ENCODE measurements at regions of chr17 and their contacts with region 1.

Region 1: GRCh38 chr17:44210342-44211192 is 8.9 kb downstream of the UBTF start:
- DNase-seq: peak; percentile 83 to 96 (median 90)
- ATAC-seq: peak; percentile 96
- H3K4me3 ChIP-seq: peak overlapping the region in 1 of 2 experiments; percentile 12
- H3K4me3 Mint-ChIP-seq: peak overlapping the region; percentile 50
- H3K27ac ChIP-seq: peak overlapping the region in 1 of 2 experiments; percentile 33
- H3K27ac Mint-ChIP-seq: peak overlapping the region; percentile 83
- H3K4me1 ChIP-seq: peaks cover 58% of the 10 kb centered on the region
- H3K4me1 Mint-ChIP-seq: peaks cover 56% of the 10 kb centered on the region
- H3K27me3 ChIP-seq: no peaks in the 10 kb centered on the region
- H3K27me3 Mint-ChIP-seq: no peaks in the 10 kb centered on the region
- CTCF ChIP-seq: peak; percentile 99

Region 2: GRCh38 chr17:44086364-44087311 is 123.9 kb before region 1 on chr17:
- CTCF ChIA-PET with region 1: no interaction called
- POLR2A ChIA-PET with region 1: no interaction called
- intact Hi-C with region 1: no loop called
- DNase-seq: peak in 7 of 9 experiments; percentile 14 to 61 (median 33)
- ATAC-seq: peak; percentile 71
- H3K4me3 ChIP-seq: no peak overlapping the region
- H3K4me3 Mint-ChIP-seq: no peak overlapping the region
- H3K27ac ChIP-seq: no peak overlapping the region
- H3K27ac Mint-ChIP-seq: peak overlapping the region; percentile 72
- H3K4me1 ChIP-seq: no peaks in the 10 kb centered on the region
- H3K4me1 Mint-ChIP-seq: peaks cover 2% of the 10 kb centered on the region
- H3K27me3 ChIP-seq: no peaks in the 10 kb centered on the region
- H3K27me3 Mint-ChIP-seq: no peaks in the 10 kb centered on the region
- CTCF ChIP-seq: no peak

Region 3: DNA sequence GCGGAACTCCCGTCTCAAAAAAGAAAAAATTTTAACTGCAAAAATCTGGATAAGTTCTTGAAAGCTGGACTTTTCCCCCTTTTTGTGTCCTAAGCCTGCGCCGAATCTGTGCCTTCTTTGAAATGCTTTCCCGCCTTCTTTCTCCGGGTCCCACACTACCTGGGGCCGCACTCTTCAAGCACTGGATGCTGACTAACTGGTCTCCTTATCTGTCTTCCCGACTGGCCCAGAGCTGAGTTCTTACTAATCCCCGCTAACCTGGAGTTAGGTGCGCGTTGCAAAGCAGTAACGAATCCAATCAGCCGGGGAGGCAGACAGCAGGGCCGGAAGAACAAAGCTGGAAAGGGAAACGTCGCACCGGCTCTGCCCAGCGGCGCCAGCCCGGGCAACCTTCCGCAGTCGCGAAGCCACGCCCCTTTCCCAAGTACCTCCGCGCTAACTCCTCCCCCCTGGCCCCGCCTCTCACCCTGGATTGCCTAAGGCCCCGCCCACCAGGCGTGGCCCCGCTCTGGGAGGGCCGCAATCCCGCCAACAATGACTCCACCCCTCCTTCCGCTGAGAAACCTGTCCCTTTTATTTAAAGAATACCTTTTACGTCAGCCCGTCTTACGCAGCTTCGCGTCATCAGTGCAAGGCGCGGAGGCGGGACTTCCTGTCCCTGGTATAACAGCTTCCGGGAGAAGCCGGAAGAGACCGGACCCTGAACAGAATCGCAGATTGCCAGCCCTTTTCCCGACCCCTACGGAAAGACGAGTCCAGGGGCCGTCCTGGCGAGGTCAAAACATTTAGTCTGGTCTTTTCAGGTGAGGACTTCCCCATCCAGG is 24.0 kb before region 1 on chr17 and contains the start of gene TMUB2:
- CTCF ChIA-PET with region 1: interaction called, 16 read pairs
- POLR2A ChIA-PET with region 1: interaction called, 12 read pairs
- intact Hi-C with region 1: no loop called
- DNase-seq: peak; percentile 99 to 100 (median 100)
- ATAC-seq: peak; percentile 97
- H3K4me3 ChIP-seq: peak within 1 kb of the TSS; percentile 89 to 94
- H3K4me3 Mint-ChIP-seq: peak within 1 kb of the TSS; percentile 100
- H3K27ac ChIP-seq: peak within 1 kb of the TSS; percentile 99
- H3K27ac Mint-ChIP-seq: peak within 1 kb of the TSS; percentile 100
- H3K4me1 ChIP-seq: peaks cover 30% of the 10 kb centered on the region
- H3K4me1 Mint-ChIP-seq: peaks cover 48% of the 10 kb centered on the region
- H3K27me3 ChIP-seq: no peaks in the 10 kb centered on the region
- H3K27me3 Mint-ChIP-seq: no peaks in the 10 kb centered on the region
- CTCF ChIP-seq: no peak
- total RNA-seq, gene TMUB2: 43.2 to 43.8 TPM

Region 4: GRCh38 chr17:44199553-44200477 is 10.8 kb before region 1 on chr17 and contains the start of gene ATXN7L3:
- CTCF ChIA-PET with region 1: interaction called, 95 read pairs
- POLR2A ChIA-PET with region 1: interaction called, 12 read pairs
- intact Hi-C with region 1: loop called in 1 of 2 experiments (anchors 1 kb)
- DNase-seq: peak; percentile 99 to 100 (median 99)
- ATAC-seq: peak; percentile 84
- H3K4me3 ChIP-seq: peak within 1 kb of the TSS; percentile 84 to 96
- H3K4me3 Mint-ChIP-seq: peak within 1 kb of the TSS; percentile 86
- H3K27ac ChIP-seq: peak within 1 kb of the TSS; percentile 69 to 92
- H3K27ac Mint-ChIP-seq: peak within 1 kb of the TSS; percentile 93
- H3K4me1 ChIP-seq: peaks cover 36% of the 10 kb centered on the region
- H3K4me1 Mint-ChIP-seq: peaks cover 43% of the 10 kb centered on the region
- H3K27me3 ChIP-seq: no peaks in the 10 kb centered on the region
- H3K27me3 Mint-ChIP-seq: no peaks in the 10 kb centered on the region
- CTCF ChIP-seq: no peak
- total RNA-seq, gene ATXN7L3: 85.5 to 85.7 TPM

Region 5: DNA sequence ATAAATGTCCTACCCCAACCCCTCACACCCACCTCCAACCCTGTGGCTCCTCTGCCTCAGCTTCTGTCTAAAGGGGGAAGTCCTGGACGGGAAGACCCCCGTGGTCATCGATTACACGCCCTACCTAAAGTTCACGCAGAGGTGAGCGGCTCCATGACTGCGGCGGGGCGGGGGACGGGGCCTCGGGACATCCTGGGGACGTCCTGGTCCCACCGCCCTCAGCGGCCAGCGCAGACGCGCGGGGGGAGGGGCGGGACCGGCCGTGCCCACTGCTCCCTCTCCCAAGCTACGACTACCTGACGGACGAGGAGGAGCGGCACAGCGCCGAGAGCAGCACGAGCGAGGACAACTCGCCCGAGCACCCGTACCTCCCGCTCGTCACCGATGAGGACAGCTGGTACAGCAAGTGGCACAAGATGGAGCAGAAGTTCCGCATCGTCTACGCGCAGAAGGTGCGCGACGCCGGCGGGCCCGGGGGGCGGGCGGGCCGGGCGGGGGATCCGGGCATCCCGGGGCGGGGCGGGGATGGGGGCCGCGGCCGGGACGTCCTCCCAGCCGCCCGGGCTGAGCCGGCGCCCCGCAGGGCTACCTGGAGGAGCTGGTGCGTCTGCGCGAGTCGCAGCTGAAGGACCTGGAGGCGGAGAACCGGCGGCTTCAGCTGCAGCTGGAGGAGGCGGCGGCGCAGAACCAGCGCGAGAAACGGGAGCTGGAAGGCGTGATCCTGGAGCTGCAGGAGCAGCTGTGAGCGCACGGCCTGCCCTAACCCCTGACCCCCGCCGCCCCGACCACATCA is 104.5 kb after region 1 on chr17:
- CTCF ChIA-PET with region 1: interaction called, 18 read pairs
- POLR2A ChIA-PET with region 1: interaction called, 3 read pairs
- intact Hi-C with region 1: no loop called
- DNase-seq: peak in 4 of 9 experiments; percentile 26 to 51 (median 38)
- ATAC-seq: peak; percentile 69
- H3K4me3 ChIP-seq: peak overlapping the region; percentile 35 to 54
- H3K4me3 Mint-ChIP-seq: peak overlapping the region; percentile 75
- H3K27ac ChIP-seq: no peak overlapping the region
- H3K27ac Mint-ChIP-seq: no peak overlapping the region
- H3K4me1 ChIP-seq: peaks cover 19% of the 10 kb centered on the region
- H3K4me1 Mint-ChIP-seq: peaks cover 14% of the 10 kb centered on the region
- H3K27me3 ChIP-seq: peaks cover 22 to 23% of the 10 kb centered on the region in 2 experiments
- H3K27me3 Mint-ChIP-seq: peaks cover 37% of the 10 kb centered on the region
- CTCF ChIP-seq: no peak

Region 6: GRCh38 chr17:44331249-44331760 is 120.7 kb after region 1 on chr17:
- CTCF ChIA-PET with region 1: interaction called, 161 read pairs
- POLR2A ChIA-PET with region 1: interaction called, 22 read pairs
- intact Hi-C with region 1: loop called (anchors 1 kb)
- DNase-seq: peak; percentile 45 to 85 (median 75)
- ATAC-seq: no peak
- H3K4me3 ChIP-seq: no peak overlapping the region
- H3K4me3 Mint-ChIP-seq: no peak overlapping the region
- H3K27ac ChIP-seq: no peak overlapping the region
- H3K27ac Mint-ChIP-seq: no peak overlapping the region
- H3K4me1 ChIP-seq: peaks cover 4% of the 10 kb centered on the region
- H3K4me1 Mint-ChIP-seq: peaks cover 12% of the 10 kb centered on the region
- H3K27me3 ChIP-seq: no peaks in the 10 kb centered on the region
- H3K27me3 Mint-ChIP-seq: no peaks in the 10 kb centered on the region
- CTCF ChIP-seq: peak; percentile 89

Region 7: DNA sequence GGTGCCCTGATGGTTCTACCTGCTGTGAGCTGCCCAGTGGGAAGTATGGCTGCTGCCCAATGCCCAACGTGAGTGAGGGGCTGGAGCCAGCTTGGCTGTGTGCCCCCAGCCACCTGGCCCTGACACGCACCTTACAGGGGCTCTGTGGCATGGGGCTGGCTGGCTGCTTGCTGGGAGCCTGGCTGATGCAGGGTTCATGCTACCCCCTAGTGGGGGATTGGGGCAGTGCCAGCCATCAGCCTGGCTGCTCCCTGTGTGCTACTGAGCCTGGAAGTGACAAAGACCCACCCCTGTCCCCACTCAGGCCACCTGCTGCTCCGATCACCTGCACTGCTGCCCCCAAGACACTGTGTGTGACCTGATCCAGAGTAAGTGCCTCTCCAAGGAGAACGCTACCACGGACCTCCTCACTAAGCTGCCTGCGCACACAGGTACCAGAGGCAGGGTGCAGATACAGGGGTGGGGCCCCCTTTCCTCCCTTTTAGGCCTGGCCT is 140.2 kb after region 1 on chr17:
- CTCF ChIA-PET with region 1: interaction called, 36 read pairs
- POLR2A ChIA-PET with region 1: interaction called, 3 read pairs
- intact Hi-C with region 1: loop called in 1 of 2 experiments (anchors 1 kb)
- DNase-seq: peak; percentile 55 to 82 (median 77)
- ATAC-seq: peak; percentile 80
- H3K4me3 ChIP-seq: no peak overlapping the region
- H3K4me3 Mint-ChIP-seq: no peak overlapping the region
- H3K27ac ChIP-seq: no peak overlapping the region
- H3K27ac Mint-ChIP-seq: no peak overlapping the region
- H3K4me1 ChIP-seq: peaks cover 11% of the 10 kb centered on the region
- H3K4me1 Mint-ChIP-seq: peaks cover 14% of the 10 kb centered on the region
- H3K27me3 ChIP-seq: no peaks in the 10 kb centered on the region
- H3K27me3 Mint-ChIP-seq: no peaks in the 10 kb centered on the region
- CTCF ChIP-seq: peak; percentile 72

Region 8: GRCh38 chr17:44385287-44386181 is 175.0 kb after region 1 on chr17:
- CTCF ChIA-PET with region 1: no interaction called
- POLR2A ChIA-PET with region 1: no interaction called
- intact Hi-C with region 1: loop called in 1 of 2 experiments (anchors 1 kb)
- DNase-seq: peak; percentile 65 to 89 (median 80)
- ATAC-seq: peak; percentile 96
- H3K4me3 ChIP-seq: peak overlapping the region; percentile 60 to 62
- H3K4me3 Mint-ChIP-seq: peak overlapping the region; percentile 75
- H3K27ac ChIP-seq: no peak overlapping the region
- H3K27ac Mint-ChIP-seq: no peak overlapping the region
- H3K4me1 ChIP-seq: peaks cover 18% of the 10 kb centered on the region
- H3K4me1 Mint-ChIP-seq: peaks cover 22% of the 10 kb centered on the region
- H3K27me3 ChIP-seq: peaks cover 3 to 8% of the 10 kb centered on the region in 2 experiments
- H3K27me3 Mint-ChIP-seq: peaks cover 31% of the 10 kb centered on the region
- CTCF ChIP-seq: no peak